ENCODE measurements at regions of chr4 and their contacts with region 1.

Region 1: DNA sequence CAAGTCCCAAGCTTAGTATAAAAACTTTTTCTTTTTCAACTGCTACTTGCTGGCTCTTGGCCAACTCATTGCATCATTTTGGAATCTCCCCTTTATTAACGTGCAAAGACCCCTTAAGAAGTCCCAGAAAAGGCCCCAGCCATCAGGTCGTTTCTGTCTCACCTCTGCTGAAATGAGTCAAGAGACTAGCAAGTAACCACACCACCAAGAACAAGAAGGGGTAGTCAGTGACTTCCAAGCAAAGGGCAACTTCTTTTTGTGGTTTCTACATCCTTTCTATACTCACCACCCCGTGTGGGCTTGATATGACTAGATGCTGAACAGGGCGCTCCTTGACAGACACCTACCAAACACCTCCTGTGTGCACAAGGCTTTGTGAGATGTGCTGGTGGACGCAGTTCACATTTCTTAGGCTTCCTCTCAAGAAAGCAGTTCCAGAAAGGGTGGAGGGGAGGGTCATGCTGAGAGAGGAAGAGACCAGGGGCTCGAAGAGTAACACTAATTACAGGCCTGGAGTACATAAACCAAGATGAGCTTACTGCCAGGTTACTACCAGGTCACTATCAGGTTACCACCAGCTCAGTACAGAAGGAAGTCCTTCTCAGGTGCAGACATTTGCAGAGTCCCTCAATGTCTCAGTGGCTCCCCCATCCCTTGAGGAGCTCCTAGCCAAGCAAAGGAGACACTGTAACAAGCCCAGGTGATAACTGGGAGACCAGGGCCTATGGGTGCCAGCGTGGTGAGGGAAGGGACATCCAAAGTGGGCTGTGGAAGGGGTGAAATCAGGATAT is 19.3 kb downstream of the JAKMIP1 start:
- DNase-seq: peak; percentile 40 to 87 (median 55)
- H3K4me3 ChIP-seq: no peak overlapping the region
- H3K4me3 Mint-ChIP-seq: peak overlapping the region; percentile 35 to 84 (median 70)
- H3K27ac ChIP-seq: peak overlapping the region; percentile 16
- H3K27ac Mint-ChIP-seq: peak overlapping the region; percentile 66 to 89 (median 85)
- H3K4me1 ChIP-seq: peaks cover 82% of the 10 kb centered on the region
- H3K4me1 Mint-ChIP-seq: peaks cover 64 to 87% (median 80%) of the 10 kb centered on the region in 4 donors
- H3K27me3 ChIP-seq: no peaks in the 10 kb centered on the region
- H3K27me3 Mint-ChIP-seq: no peaks in the 10 kb centered on the region

Region 2: GRCh38 chr4:6134612-6135220 is 46.3 kb before region 1 on chr4:
- CTCF ChIA-PET with region 1: interaction called, 13 read pairs
- POLR2A ChIA-PET with region 1: interaction called, 3 read pairs
- intact Hi-C with region 1: loop called (anchors 10 kb)
- DNase-seq: peak; percentile 48 to 75 (median 60)
- H3K4me3 ChIP-seq: no peak overlapping the region
- H3K4me3 Mint-ChIP-seq: no peak overlapping the region
- H3K27ac ChIP-seq: no peak overlapping the region
- H3K27ac Mint-ChIP-seq: peak overlapping the region; percentile 6 to 78 (median 49)
- H3K4me1 ChIP-seq: peaks cover 11% of the 10 kb centered on the region
- H3K4me1 Mint-ChIP-seq: peaks cover 6 to 20% (median 14%) of the 10 kb centered on the region in 4 donors
- H3K27me3 ChIP-seq: no peaks in the 10 kb centered on the region
- H3K27me3 Mint-ChIP-seq: no peaks in the 10 kb centered on the region

Region 3: GRCh38 chr4:6191448-6192130 is 10.6 kb after region 1 on chr4:
- CTCF ChIA-PET with region 1: interaction called, 11 read pairs
- POLR2A ChIA-PET with region 1: interaction called, 3 read pairs
- intact Hi-C with region 1: no loop called
- DNase-seq: peak in 1 of 5 donors; percentile 15
- H3K4me3 ChIP-seq: no peak overlapping the region
- H3K4me3 Mint-ChIP-seq: no peak overlapping the region
- H3K27ac ChIP-seq: no peak overlapping the region
- H3K27ac Mint-ChIP-seq: no peak overlapping the region
- H3K4me1 ChIP-seq: no peaks in the 10 kb centered on the region
- H3K4me1 Mint-ChIP-seq: peaks cover 0 to 32% (median 3%) of the 10 kb centered on the region in 4 donors
- H3K27me3 ChIP-seq: no peaks in the 10 kb centered on the region
- H3K27me3 Mint-ChIP-seq: no peaks in the 10 kb centered on the region

Region 4: DNA sequence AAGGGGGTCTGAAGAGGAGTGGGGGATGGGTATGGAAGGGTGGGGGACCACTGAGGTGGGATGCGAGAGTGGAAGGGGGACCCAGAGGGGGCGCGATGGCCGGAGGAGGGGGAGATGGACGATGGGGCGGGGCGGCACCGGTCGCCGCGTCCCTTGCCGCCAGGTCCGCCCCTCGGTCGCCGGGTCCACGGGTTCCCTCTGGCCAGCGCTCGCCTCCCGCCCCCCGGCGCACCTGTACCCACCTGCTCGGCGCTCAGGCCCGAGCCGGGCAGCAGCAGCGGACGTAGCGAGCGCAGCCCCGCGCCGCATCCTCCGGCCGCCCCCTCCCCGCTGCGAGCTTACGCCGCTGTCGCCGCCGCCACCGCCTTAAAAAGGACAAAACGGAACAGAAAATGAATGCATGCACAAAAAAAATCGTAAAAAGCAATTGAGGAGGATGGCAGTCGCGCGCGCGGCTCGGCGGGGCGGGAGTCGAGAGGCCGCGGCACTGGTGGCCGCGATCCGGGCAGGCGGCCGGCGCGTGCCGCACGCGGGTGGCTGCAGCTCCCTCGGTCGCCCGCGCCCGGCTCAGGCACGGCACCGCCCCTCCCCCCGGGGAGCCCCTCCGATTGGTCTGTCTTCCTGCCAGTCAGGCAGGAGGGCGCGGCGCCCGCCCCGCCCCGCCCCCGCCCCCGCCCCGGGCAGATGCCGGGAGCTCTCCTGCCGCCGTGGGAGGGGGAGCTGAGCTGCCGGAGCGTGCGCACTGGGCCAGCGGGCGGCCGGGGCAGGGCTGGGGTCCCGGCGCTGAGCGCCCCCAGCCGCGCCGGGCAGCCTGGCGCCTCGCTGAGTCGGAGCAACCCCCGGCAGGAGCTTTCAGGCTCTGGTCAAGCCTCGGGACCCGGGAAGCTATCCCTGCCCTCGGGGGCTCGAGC is 19.2 kb after region 1 on chr4 and contains the start of gene JAKMIP1:
- CTCF ChIA-PET with region 1: interaction called, 23 read pairs
- POLR2A ChIA-PET with region 1: interaction called, 71 read pairs
- intact Hi-C with region 1: loop called (anchors 2 kb)
- DNase-seq: peak; percentile 80 to 90 (median 82)
- H3K4me3 ChIP-seq: peak within 1 kb of the TSS in 1 of 2 donors; percentile 62
- H3K4me3 Mint-ChIP-seq: peak within 1 kb of the TSS; percentile 76 to 94 (median 86)
- H3K27ac ChIP-seq: peak within 1 kb of the TSS; percentile 28
- H3K27ac Mint-ChIP-seq: peak within 1 kb of the TSS; percentile 57 to 90 (median 69)
- H3K4me1 ChIP-seq: peaks cover 36% of the 10 kb centered on the region
- H3K4me1 Mint-ChIP-seq: peaks cover 16 to 39% (median 22%) of the 10 kb centered on the region in 4 donors
- H3K27me3 ChIP-seq: no peaks in the 10 kb centered on the region
- H3K27me3 Mint-ChIP-seq: peaks cover 2% of the 10 kb centered on the region in 2 donors
- total RNA-seq, gene JAKMIP1: 3.0 to 3.7 TPM

Region 5: DNA sequence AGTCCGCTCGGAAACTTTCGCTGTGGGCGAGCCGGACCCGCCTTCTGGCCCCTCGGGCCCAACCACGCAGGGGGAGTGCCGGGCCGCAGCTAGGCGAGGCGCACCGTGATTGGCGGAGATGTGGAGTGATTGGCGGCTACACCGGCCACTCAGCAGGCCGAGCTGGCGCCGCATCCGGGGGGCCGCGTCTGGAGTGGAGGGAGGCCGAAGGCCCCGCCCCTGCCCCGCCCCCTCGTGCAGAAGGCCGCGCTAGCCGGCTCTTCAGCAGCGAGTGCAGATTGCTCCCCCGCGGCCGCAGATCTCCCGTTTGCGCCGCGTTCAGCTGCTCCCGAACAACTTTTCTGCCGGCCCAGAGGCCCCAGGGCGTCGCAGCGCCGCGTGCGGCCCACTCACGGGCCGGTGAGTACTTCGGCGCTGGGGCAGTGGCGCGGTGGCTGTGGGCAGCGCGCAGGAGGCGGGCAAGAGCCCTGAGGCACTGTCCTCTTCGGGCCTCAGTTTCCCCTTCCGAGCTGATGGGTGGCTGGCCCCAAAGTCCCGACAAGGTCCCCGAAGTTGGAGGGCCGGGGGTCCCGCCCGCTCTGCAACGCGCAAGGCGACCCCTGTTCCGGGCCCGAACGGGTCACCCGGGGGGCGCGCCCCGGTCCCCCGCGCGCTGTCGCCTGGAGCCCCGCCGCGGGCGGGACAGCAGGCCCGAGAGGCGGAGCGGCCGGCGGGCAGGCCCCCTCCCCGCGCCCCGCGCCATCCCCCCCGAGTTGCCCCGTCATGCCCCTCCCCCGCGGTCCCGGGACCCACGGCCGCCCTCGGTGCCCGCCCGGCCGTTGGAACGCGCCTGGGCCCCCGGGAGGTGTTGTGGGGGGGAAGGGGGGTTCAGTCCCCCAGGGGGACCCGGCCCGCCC is 88.8 kb after region 1 on chr4 and contains the start of gene WFS1:
- CTCF ChIA-PET with region 1: no interaction called
- POLR2A ChIA-PET with region 1: no interaction called
- intact Hi-C with region 1: loop called (anchors 2 kb)
- DNase-seq: peak; percentile 94 to 96 (median 94)
- H3K4me3 ChIP-seq: peak within 1 kb of the TSS in 1 of 2 donors; percentile 75
- H3K4me3 Mint-ChIP-seq: peak within 1 kb of the TSS; percentile 85 to 92 (median 88)
- H3K27ac ChIP-seq: peak within 1 kb of the TSS; percentile 49
- H3K27ac Mint-ChIP-seq: peak within 1 kb of the TSS in 6 of 7 donors; percentile 48 to 81 (median 71)
- H3K4me1 ChIP-seq: peaks cover 10% of the 10 kb centered on the region
- H3K4me1 Mint-ChIP-seq: peaks cover 13 to 25% (median 14%) of the 10 kb centered on the region in 4 donors
- H3K27me3 ChIP-seq: no peaks in the 10 kb centered on the region
- H3K27me3 Mint-ChIP-seq: peaks cover 0 to 2% of the 10 kb centered on the region in 2 donors
- total RNA-seq, gene WFS1: 5.4 to 5.5 TPM

Region 6: DNA sequence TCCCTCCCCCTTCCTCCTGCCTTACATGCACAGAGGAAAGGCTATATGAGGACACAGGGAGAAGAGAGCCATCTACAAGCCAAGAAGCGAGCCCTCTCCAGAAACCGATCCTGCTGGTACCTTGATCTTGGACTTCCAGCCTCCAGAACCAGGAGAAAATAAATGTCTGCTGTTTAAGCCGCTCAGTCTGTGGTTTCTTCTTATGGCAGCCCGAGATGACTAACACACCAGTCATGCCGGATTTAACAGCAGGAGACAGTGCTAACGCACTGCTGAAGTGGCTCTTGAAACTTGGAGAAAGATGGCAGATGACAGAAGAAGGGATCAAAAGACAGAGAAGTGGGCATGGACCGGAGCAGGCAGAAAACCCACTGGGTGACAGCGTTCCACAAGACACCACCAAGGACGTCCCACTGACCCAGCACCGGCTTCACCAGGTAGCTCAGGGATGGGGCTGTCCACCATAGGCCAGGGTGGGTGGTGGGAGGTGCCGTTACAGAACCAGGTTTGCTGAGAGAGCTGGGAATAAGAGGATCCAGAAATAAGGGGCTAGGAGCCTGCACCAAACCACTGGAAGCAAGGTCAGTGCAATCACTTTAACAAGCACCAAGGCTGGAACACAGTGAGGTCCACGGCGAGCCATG is 387.8 kb after region 1 on chr4:
- CTCF ChIA-PET with region 1: no interaction called
- POLR2A ChIA-PET with region 1: no interaction called
- intact Hi-C with region 1: no loop called
- DNase-seq: no peak
- H3K4me3 ChIP-seq: no peak overlapping the region
- H3K4me3 Mint-ChIP-seq: no peak overlapping the region
- H3K27ac ChIP-seq: no peak overlapping the region
- H3K27ac Mint-ChIP-seq: peak overlapping the region in 1 of 7 donors; percentile 21
- H3K4me1 ChIP-seq: peaks cover 5% of the 10 kb centered on the region
- H3K4me1 Mint-ChIP-seq: peaks cover 0 to 13% (median 0%) of the 10 kb centered on the region in 4 donors
- H3K27me3 ChIP-seq: no peaks in the 10 kb centered on the region
- H3K27me3 Mint-ChIP-seq: peaks cover 12 to 17% of the 10 kb centered on the region in 2 donors